PC-9 (cell line): ENCODE measurements at regions of chr5 and their contacts with region 1.

Region 1: DNA sequence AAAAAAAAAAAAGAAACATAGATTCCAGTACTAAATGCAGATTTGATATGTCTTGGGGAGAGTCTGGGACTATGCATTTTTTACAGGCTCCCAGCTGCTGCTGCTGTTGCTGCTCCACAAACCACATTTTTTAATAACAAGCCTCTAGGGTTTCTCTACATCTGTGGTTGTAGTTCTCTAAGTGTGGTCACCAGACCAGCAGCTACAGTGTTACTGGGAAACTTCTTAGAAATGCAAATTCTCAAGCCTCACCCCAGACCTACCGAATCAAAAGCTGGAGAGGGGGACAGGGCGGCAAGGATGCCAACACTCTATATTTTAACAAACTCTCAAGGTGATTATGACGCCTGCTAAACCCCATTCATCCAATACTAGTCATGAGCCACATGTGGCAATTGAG is 293.4 kb upstream of the PTGER4 start:
- DNase-seq: no peak
- H3K4me3 ChIP-seq: no peak overlapping the region
- H3K27ac ChIP-seq: peak overlapping the region; percentile 91
- H3K4me1 ChIP-seq: peaks cover 56% of the 10 kb centered on the region
- H3K27me3 ChIP-seq: no peaks in the 10 kb centered on the region
- CTCF ChIP-seq: no peak

Region 2: DNA sequence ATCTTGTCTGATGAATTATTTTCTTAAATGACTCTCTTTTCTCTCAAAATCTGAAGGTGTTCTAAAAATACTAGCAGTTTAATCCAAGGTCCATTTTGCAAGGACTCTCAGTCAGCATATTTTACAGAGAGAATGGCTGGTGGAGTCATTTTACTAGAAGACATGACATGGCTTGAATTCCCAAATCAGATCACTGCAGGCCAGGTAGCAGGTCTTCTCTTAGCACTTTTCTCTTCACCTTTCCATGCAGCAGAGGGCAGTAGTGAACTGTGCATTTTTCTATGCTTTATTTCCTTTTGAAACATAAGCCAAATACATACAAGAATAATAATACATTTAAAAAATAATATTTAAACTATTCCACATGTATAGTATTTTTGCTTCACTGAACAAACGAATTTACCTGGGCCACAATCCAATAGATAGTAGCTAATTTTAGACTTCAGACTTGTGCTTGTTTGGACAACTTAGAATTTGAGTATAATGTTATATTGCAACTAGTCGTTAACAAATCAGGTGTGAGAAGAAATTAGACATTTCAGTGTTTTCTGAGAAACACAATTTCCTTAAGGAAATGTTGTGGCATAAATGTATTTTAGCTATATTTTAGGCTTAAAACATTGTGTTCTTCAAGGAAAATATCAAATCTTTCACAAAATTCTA is 672.1 kb before region 1 on chr5:
- CTCF ChIA-PET with region 1: no interaction called
- POLR2A ChIA-PET with region 1: no interaction called
- intact Hi-C with region 1: loop called (anchors 2 kb)
- DNase-seq: peak; percentile 63 to 74
- H3K4me3 ChIP-seq: no peak overlapping the region
- H3K27ac ChIP-seq: peak overlapping the region; percentile 60
- H3K4me1 ChIP-seq: peaks cover 8% of the 10 kb centered on the region; the same call in 1 of the 2 replicates
- H3K27me3 ChIP-seq: no peaks in the 10 kb centered on the region
- CTCF ChIP-seq: peak; percentile 87

Region 3: GRCh38 chr5:40410231-40410861 is 24.1 kb after region 1 on chr5:
- CTCF ChIA-PET with region 1: no interaction called
- POLR2A ChIA-PET with region 1: no interaction called
- intact Hi-C with region 1: loop called (anchors 1 kb)
- DNase-seq: peak; percentile 41 to 44
- H3K4me3 ChIP-seq: no peak overlapping the region
- H3K27ac ChIP-seq: no peak overlapping the region
- H3K4me1 ChIP-seq: peaks cover 20% of the 10 kb centered on the region
- H3K27me3 ChIP-seq: no peaks in the 10 kb centered on the region
- CTCF ChIP-seq: no peak

Region 4: GRCh38 chr5:40518511-40518967 is 132.2 kb after region 1 on chr5:
- CTCF ChIA-PET with region 1: no interaction called
- POLR2A ChIA-PET with region 1: no interaction called
- intact Hi-C with region 1: loop called (anchors 1 kb)
- DNase-seq: peak; percentile 96 to 98
- H3K4me3 ChIP-seq: no peak overlapping the region
- H3K27ac ChIP-seq: peak overlapping the region; percentile 84
- H3K4me1 ChIP-seq: peaks cover 33% of the 10 kb centered on the region
- H3K27me3 ChIP-seq: no peaks in the 10 kb centered on the region
- CTCF ChIP-seq: no peak

Region 5: GRCh38 chr5:40679155-40679913 is 293.0 kb after region 1 on chr5:
- CTCF ChIA-PET with region 1: interaction called, 3 read pairs
- POLR2A ChIA-PET with region 1: interaction called, 13 read pairs
- intact Hi-C with region 1: loop called (anchors 1 kb)
- DNase-seq: peak; percentile 97 to 100
- H3K4me3 ChIP-seq: peak overlapping the region; percentile 82
- H3K27ac ChIP-seq: peak overlapping the region; percentile 93
- H3K4me1 ChIP-seq: peaks cover 54% of the 10 kb centered on the region
- H3K27me3 ChIP-seq: no peaks in the 10 kb centered on the region
- CTCF ChIP-seq: no peak

Region 6: GRCh38 chr5:40755407-40756365 is 369.4 kb after region 1 on chr5 and contains the start of gene TTC33:
- CTCF ChIA-PET with region 1: no interaction called
- POLR2A ChIA-PET with region 1: interaction called, 4 read pairs
- intact Hi-C with region 1: loop called (anchors 2 kb)
- DNase-seq: peak; percentile 90 to 99
- H3K4me3 ChIP-seq: peak within 1 kb of the TSS; percentile 79
- H3K27ac ChIP-seq: peak within 1 kb of the TSS; percentile 36
- H3K4me1 ChIP-seq: peaks cover 11% of the 10 kb centered on the region
- H3K27me3 ChIP-seq: no peaks in the 10 kb centered on the region
- CTCF ChIP-seq: peak; percentile 76
- total RNA-seq, gene TTC33: 29.4 and 30.2 TPM in 2 replicates